Activated B cell treated with CpG ODN at 0.5 μM for 24 hours (primary cell): ENCODE measurements at regions of chr14 and their contacts with region 1.

Region 1: DNA sequence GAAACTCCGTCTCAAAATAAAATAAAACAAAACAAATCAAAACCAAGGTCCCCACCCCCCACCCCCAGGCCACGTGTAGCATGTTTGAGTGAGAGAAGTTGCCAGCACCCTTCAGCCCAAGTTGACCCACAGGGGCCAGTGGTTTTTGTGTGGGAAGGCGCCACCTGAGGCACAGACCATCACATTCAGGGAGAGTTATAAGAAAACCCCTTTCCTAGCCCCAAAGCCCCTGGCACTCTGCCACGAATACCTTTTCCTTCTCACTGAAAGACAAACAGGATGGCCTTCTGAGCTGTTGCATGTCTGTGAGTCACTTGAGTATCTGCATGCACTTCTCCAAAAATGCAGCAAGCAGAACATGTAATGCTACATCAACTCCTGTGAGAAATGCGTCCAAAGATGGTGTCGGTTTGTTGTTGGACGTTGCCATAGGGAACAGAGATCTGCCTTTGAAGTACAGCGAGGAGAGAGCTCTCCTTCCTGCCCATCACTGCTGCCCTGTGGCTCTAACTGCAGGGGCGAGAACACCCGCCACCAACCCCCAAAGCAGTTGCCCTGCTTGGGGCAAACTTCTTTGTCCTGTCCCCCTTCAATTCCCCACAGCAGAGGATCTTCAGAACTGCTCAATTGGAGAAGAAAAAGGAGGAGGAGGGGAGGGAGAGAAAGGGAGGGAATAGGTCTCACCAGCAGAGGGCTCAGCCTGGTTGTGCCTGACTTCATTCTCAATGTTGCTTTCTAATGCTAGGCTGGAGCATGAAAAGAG is 2.7 kb upstream of the TRAF3 start:
- DNase-seq: peak; percentile 64
- ATAC-seq: peak; percentile 53
- H3K4me3 Mint-ChIP-seq: peak overlapping the region; percentile 70
- H3K27ac Mint-ChIP-seq: peak overlapping the region; percentile 96
- H3K4me1 Mint-ChIP-seq: peaks cover 76% of the 10 kb centered on the region
- H3K27me3 Mint-ChIP-seq: no peaks in the 10 kb centered on the region
- CTCF ChIP-seq: no peak

Region 2: GRCh38 chr14:102579696-102580334 is 194.8 kb before region 1 on chr14:
- CTCF ChIA-PET with region 1: no interaction called
- POLR2A ChIA-PET with region 1: no interaction called
- intact Hi-C with region 1: no loop called
- DNase-seq: no peak
- ATAC-seq: no peak
- H3K4me3 Mint-ChIP-seq: no peak overlapping the region
- H3K27ac Mint-ChIP-seq: no peak overlapping the region
- H3K4me1 Mint-ChIP-seq: no peaks in the 10 kb centered on the region
- H3K27me3 Mint-ChIP-seq: peaks cover 3% of the 10 kb centered on the region
- CTCF ChIP-seq: no peak

Region 3: GRCh38 chr14:102708494-102708893 is 66.1 kb before region 1 on chr14:
- CTCF ChIA-PET with region 1: no interaction called
- POLR2A ChIA-PET with region 1: no interaction called
- intact Hi-C with region 1: loop called (anchors 5 kb)
- DNase-seq: no peak
- ATAC-seq: no peak
- H3K4me3 Mint-ChIP-seq: no peak overlapping the region
- H3K27ac Mint-ChIP-seq: peak overlapping the region; percentile 30
- H3K4me1 Mint-ChIP-seq: peaks cover 6% of the 10 kb centered on the region
- H3K27me3 Mint-ChIP-seq: no peaks in the 10 kb centered on the region
- CTCF ChIP-seq: no peak

Region 4: GRCh38 chr14:102754370-102755262 is 20.0 kb before region 1 on chr14:
- CTCF ChIA-PET with region 1: interaction called, 5 read pairs
- POLR2A ChIA-PET with region 1: interaction called, 14 read pairs
- intact Hi-C with region 1: no loop called
- DNase-seq: peak; percentile 39
- ATAC-seq: peak; percentile 80
- H3K4me3 Mint-ChIP-seq: peak overlapping the region; percentile 74
- H3K27ac Mint-ChIP-seq: peak overlapping the region; percentile 88
- H3K4me1 Mint-ChIP-seq: peaks cover 53% of the 10 kb centered on the region
- H3K27me3 Mint-ChIP-seq: no peaks in the 10 kb centered on the region
- CTCF ChIP-seq: no peak

Region 5: DNA sequence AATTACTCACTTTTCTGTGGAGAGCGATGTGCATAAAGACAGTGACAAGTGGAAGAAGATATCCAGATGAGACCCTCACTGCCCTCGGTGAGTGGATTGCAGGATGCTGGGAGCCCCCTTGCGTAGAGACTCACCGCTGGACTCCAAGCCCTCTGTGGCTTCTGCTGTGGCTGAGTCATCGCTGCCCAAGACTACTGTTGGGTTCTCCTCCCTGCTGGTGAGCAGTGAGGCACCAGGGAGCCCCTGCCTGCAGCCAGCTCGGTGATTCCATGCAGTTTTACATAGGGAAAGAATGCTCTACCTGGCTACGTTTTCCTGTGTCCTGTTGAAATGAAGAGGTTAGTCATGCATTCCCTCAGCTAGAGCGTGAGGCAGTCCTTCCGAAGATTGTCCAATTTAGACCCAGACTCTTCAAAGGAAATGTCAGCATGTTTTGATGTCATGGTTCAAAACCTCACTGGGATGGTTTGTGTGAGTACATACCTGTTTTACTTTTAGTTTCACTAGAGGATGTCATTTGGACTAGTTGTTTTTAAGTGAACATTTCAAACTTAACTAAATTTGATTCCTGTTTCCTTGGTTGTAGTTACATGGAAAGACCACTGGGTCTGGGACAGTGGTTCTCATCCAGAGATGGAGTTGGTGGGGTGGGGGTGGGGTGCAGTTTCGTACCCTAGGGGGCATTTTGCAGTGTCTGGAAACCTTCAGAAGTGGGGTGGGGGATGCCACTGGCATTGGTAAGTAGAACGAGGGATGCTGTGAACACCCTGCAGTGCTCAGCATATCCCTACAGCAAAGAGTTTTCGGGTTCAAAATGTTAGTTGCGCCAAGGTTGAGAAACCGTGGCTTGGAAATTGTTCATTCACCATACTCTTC is 31.0 kb after region 1 on chr14:
- CTCF ChIA-PET with region 1: no interaction called
- POLR2A ChIA-PET with region 1: interaction called, 8 read pairs
- intact Hi-C with region 1: loop called (anchors 1 kb)
- DNase-seq: peak; percentile 30
- ATAC-seq: peak; percentile 51
- H3K4me3 Mint-ChIP-seq: peak overlapping the region; percentile 74
- H3K27ac Mint-ChIP-seq: peak overlapping the region; percentile 83
- H3K4me1 Mint-ChIP-seq: peaks cover 79% of the 10 kb centered on the region
- H3K27me3 Mint-ChIP-seq: no peaks in the 10 kb centered on the region
- CTCF ChIP-seq: no peak

Region 6: GRCh38 chr14:102900631-102901571 is 126.3 kb after region 1 on chr14:
- CTCF ChIA-PET with region 1: no interaction called
- POLR2A ChIA-PET with region 1: interaction called, 6 read pairs
- intact Hi-C with region 1: loop called (anchors 5 kb)
- DNase-seq: no peak
- ATAC-seq: peak; percentile 47
- H3K4me3 Mint-ChIP-seq: peak overlapping the region; percentile 75
- H3K27ac Mint-ChIP-seq: peak overlapping the region; percentile 94
- H3K4me1 Mint-ChIP-seq: peaks cover 70% of the 10 kb centered on the region
- H3K27me3 Mint-ChIP-seq: no peaks in the 10 kb centered on the region
- CTCF ChIP-seq: no peak

Region 7: GRCh38 chr14:103257201-103257962 is 482.8 kb after region 1 on chr14:
- CTCF ChIA-PET with region 1: no interaction called
- POLR2A ChIA-PET with region 1: no interaction called
- intact Hi-C with region 1: no loop called
- DNase-seq: no peak
- ATAC-seq: no peak
- H3K4me3 Mint-ChIP-seq: no peak overlapping the region
- H3K27ac Mint-ChIP-seq: no peak overlapping the region
- H3K4me1 Mint-ChIP-seq: peaks cover 12% of the 10 kb centered on the region
- H3K27me3 Mint-ChIP-seq: peaks cover 6% of the 10 kb centered on the region
- CTCF ChIP-seq: no peak